ENCODE measurements at regions of chr17 and their contacts with region 1.

Region 1: DNA sequence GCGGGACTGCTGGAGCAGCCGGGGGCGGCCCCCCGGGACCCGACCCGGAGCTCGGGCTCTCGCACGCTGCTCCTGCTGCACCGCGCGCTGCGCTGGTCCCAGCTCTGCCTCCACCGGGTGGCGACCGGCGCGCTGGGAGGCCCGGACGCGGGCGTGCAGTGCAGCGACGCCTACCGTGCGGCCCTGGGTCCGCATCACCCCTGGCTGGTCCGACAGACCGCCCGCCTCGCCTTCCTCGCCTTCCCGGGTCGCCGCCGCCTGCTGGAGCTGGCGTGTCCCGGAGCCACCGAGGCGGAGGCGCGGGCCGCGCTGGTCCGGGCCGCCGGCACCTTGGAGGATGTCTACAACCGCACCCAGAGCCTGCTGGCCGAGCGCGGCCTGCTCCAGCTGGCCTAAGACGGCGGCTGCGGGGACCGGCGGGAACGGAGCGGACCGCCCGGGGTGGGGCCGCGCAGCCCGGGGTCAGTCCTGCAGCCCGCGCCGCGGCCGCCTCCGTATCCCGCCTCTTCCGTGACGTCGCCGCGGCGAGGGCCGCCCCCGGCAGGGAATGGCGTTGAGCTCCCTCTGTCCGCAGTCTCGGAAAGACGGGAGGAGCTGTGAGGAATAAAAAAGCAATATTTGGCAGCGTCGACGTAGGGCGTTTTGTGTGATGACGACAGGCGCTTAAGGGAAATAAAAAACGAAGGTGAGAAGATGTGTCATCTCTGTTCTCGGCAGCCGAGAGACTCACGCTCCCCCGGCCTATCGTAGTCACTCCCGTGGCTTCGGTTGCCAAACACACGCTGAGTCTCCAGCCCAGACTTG is 1.3 kb downstream of the GLTPD2 start:
- DNase-seq: peak; percentile 67 to 86 (median 76)
- H3K4me3 ChIP-seq: peak overlapping the region; percentile 42
- H3K4me3 Mint-ChIP-seq: peak overlapping the region; percentile 82 to 95 (median 89)
- H3K27ac ChIP-seq: peak overlapping the region; percentile 83
- H3K27ac Mint-ChIP-seq: peak overlapping the region; percentile 70 to 95 (median 89)
- H3K4me1 ChIP-seq: peaks cover 24% of the 10 kb centered on the region
- H3K4me1 Mint-ChIP-seq: peaks cover 18 to 38% (median 26%) of the 10 kb centered on the region in 3 donors
- H3K27me3 ChIP-seq: peaks cover 9% of the 10 kb centered on the region
- H3K27me3 Mint-ChIP-seq: peaks cover 29 to 33% of the 10 kb centered on the region in 2 donors

Region 2: DNA sequence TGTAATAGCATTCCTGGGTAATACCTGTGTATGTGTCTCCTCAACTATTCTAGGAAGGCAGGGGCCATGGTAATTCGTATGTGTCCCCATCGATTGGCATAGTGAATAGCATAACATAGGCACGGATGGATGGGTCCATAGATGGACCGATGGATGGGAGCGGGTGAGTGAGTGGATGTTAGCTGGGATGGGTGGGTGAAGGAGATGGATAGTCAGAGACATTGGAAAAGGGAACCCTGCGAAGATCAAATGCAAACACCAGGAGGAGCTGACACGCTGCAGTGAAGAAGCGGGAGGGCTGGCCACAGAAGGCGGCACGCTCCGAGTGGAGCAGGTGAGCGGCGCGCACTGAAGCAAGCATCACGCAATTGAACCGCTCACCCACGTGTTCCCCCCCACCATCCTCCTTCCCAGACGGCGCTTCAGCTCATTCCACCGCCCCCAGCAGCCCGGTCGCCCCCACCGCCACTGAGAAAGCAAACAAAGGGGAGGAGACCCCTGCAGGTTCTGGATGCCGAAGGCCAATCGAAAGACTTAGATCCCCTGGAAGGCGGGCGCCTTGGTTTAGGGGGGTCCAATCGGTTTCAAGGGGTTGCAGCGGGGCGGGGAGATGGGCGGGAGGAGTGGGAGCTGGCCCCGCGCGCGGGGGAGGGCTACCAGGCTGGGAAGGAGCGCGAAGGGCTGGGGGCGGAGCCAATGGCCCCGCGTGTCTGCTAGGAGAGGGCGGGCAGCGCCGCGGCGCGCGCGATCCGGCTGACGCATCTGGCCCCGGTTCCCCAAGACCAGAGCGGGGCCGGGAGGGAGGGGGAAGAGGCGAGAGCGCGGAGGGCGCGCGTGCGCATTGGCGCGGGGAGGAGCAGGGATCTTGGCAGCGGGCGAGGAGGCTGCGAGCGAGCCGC is 80.1 kb before region 1 on chr17 and contains the start of gene ARRB2:
- CTCF ChIA-PET with region 1: interaction called, 52 read pairs
- POLR2A ChIA-PET with region 1: interaction called, 24 read pairs
- DNase-seq: peak; percentile 99 to 100 (median 99)
- H3K4me3 ChIP-seq: peak within 1 kb of the TSS; percentile 86
- H3K4me3 Mint-ChIP-seq: peak within 1 kb of the TSS; percentile 78 to 99 (median 98)
- H3K27ac ChIP-seq: peak within 1 kb of the TSS; percentile 77
- H3K27ac Mint-ChIP-seq: peak within 1 kb of the TSS; percentile 68 to 98 (median 94)
- H3K4me1 ChIP-seq: peaks cover 40% of the 10 kb centered on the region
- H3K4me1 Mint-ChIP-seq: peaks cover 42 to 56% (median 51%) of the 10 kb centered on the region in 3 donors
- H3K27me3 ChIP-seq: no peaks in the 10 kb centered on the region
- H3K27me3 Mint-ChIP-seq: peaks cover 0 to 2% of the 10 kb centered on the region in 2 donors
- total RNA-seq, gene ARRB2: 170 to 172 TPM

Region 3: DNA sequence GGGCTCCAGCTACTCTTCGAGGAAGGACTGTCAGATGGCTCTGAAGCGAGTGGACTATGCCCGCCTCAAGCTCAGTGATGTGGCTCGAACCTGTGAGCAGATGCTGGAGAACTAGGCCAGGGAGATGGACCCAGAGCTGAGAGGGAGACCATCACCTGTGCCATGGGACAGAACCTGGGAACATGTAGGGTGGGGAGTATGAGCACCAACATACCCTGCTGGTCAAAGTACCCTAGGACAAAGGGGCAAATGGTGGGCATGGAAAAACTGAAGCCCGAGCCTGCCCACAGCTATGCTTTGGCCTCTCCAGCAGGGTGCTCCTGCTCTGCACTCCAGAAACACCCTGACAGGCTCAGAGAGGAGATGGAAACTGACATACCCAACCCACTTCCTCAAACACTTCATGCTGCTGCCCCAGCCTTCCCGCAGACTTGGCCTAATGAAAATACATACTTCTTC is 57.0 kb before region 1 on chr17:
- CTCF ChIA-PET with region 1: interaction called, 20 read pairs
- POLR2A ChIA-PET with region 1: interaction called, 6 read pairs
- DNase-seq: no peak
- H3K4me3 ChIP-seq: no peak overlapping the region
- H3K4me3 Mint-ChIP-seq: peak overlapping the region in 4 of 7 donors; percentile 47 to 99 (median 80)
- H3K27ac ChIP-seq: no peak overlapping the region
- H3K27ac Mint-ChIP-seq: peak overlapping the region in 2 of 8 donors; percentile 68 to 71
- H3K4me1 ChIP-seq: peaks cover 1% of the 10 kb centered on the region
- H3K4me1 Mint-ChIP-seq: peaks cover 22 to 31% (median 27%) of the 10 kb centered on the region in 3 donors
- H3K27me3 ChIP-seq: no peaks in the 10 kb centered on the region
- H3K27me3 Mint-ChIP-seq: peaks cover 0 to 1% of the 10 kb centered on the region in 2 donors

Region 4: DNA sequence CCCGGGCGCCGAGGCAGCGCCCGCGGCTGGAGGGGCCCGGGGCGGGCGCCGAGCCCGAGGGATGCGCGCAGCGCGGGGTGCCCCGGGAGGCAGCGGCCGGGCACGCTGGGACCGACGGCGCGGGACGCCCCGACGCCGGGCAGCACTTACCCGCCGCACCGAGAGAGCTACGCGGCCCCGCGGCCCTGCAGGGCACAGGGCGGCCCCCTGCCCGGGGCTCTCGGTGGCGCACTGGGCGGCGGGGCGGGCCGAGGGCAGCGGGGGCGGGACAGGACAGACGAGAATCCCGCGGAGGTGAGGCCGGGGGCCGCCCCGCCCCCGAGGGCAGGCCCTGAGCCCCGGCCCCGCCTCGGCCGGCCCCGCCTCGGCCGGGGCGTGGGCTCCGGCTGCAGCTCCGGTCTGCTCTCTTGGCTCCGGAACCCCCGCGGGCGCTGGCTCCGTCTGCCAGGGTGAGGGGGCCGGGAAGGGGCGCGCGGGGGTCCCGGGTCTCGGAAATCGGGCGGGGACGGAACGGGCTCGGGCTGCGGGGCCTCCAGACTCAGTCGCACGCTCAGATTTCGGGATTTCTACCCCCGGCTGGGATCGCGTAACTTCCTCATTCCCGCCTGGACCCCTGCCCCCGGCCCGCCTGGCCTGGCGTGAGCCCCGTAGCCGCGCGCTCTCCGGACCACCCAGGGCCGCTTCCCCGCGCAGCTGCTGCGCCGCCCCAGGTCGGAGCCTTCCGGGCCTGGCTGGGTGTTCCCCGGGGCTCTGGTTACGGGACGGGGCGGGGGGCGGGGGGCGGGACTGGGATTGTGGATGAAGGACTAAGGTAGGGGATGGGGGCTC is 16.9 kb after region 1 on chr17 and contains the start of gene PLD2:
- CTCF ChIA-PET with region 1: interaction called, 15 read pairs
- POLR2A ChIA-PET with region 1: interaction called, 3 read pairs
- DNase-seq: peak; percentile 82 to 89 (median 87)
- H3K4me3 ChIP-seq: peak within 1 kb of the TSS; percentile 51
- H3K4me3 Mint-ChIP-seq: peak within 1 kb of the TSS; percentile 79 to 87 (median 82)
- H3K27ac ChIP-seq: peak within 1 kb of the TSS; percentile 31
- H3K27ac Mint-ChIP-seq: peak within 1 kb of the TSS in 6 of 8 donors; percentile 36 to 97 (median 70)
- H3K4me1 ChIP-seq: peaks cover 11% of the 10 kb centered on the region
- H3K4me1 Mint-ChIP-seq: peaks cover 6 to 18% (median 12%) of the 10 kb centered on the region in 3 donors
- H3K27me3 ChIP-seq: no peaks in the 10 kb centered on the region
- H3K27me3 Mint-ChIP-seq: peaks cover 0 to 1% of the 10 kb centered on the region in 2 donors
- total RNA-seq, gene PLD2: 10.1 to 12.0 TPM

Region 5: GRCh38 chr17:4891411-4892342 is 101.6 kb after region 1 on chr17:
- CTCF ChIA-PET with region 1: interaction called, 16 read pairs
- POLR2A ChIA-PET with region 1: no interaction called
- DNase-seq: peak in 1 of 5 donors; percentile 48
- H3K4me3 ChIP-seq: no peak overlapping the region
- H3K4me3 Mint-ChIP-seq: no peak overlapping the region
- H3K27ac ChIP-seq: no peak overlapping the region
- H3K27ac Mint-ChIP-seq: peak overlapping the region in 2 of 8 donors; percentile 32 to 77
- H3K4me1 ChIP-seq: no peaks in the 10 kb centered on the region
- H3K4me1 Mint-ChIP-seq: peaks cover 2 to 5% (median 4%) of the 10 kb centered on the region in 3 donors
- H3K27me3 ChIP-seq: no peaks in the 10 kb centered on the region
- H3K27me3 Mint-ChIP-seq: peaks cover 0 to 3% of the 10 kb centered on the region in 2 donors

Measured in CD8-positive, alpha-beta memory T cell (primary cell).